ENCODE measurements at regions of chrX and their contacts with region 1.

Region 1: DNA sequence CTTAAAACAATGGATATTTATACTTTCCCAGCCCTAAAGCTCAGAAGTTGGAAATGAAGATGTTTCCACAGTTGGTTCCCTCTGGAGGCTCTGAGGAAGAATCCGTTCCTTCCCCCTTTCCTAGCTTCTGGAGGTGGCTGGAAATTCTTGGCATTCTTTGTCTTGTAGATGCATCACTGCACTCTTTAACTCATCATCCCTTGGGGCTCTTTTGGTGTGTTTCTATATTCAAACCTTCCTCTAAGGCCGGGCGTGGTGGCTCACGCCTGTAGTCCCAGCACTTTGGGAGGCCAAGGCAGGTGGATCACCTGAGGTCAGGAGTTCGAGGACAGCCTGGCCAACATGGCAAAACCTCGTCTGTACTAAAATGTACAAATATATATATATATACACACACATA is 78.7 kb downstream of the VCX3A start:
- DNase-seq: no peak
- H3K4me3 ChIP-seq: no peak overlapping the region
- H3K27ac ChIP-seq: no peak overlapping the region
- H3K4me1 ChIP-seq: no peaks in the 10 kb centered on the region
- H3K27me3 ChIP-seq: no peaks in the 10 kb centered on the region
- CTCF ChIP-seq: no peak
- EP300 ChIP-seq: no peak
- POLR2A ChIP-seq: no peak

Region 2: DNA sequence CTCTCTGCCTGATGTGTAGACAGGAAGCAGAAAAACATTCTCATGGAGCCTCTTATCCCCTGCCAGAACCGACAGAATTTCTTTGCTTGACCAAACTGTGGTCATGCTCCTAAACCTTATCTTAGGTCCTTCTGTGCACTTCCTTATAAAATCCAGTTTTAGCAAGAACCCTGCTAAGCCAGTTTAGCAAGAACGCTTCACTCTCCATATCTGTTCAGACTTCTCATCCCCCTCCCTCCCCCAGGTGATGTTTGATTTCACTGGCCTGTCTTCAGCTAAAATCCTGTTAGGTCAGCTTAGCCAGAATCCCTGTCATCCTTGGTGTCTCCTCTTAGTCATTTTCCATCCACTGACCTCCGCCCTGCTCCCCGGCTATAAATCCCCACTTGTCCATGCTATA is 1611.8 kb before region 1 on chrX:
- in situ Hi-C with region 1: no loop called
- intact Hi-C with region 1: loop called (anchors 5 kb)
- DNase-seq: no peak
- H3K4me3 ChIP-seq: no peak overlapping the region
- H3K27ac ChIP-seq: no peak overlapping the region
- H3K4me1 ChIP-seq: no peaks in the 10 kb centered on the region
- H3K27me3 ChIP-seq: no peaks in the 10 kb centered on the region
- CTCF ChIP-seq: no peak
- EP300 ChIP-seq: no peak
- POLR2A ChIP-seq: no peak

Region 3: GRCh38 chrX:5015451-5015850 is 1440.8 kb before region 1 on chrX:
- in situ Hi-C with region 1: no loop called
- intact Hi-C with region 1: no loop called
- DNase-seq: no peak
- H3K4me3 ChIP-seq: no peak overlapping the region
- H3K27ac ChIP-seq: no peak overlapping the region
- H3K4me1 ChIP-seq: no peaks in the 10 kb centered on the region
- H3K27me3 ChIP-seq: no peaks in the 10 kb centered on the region
- CTCF ChIP-seq: no peak
- EP300 ChIP-seq: no peak
- POLR2A ChIP-seq: no peak

Region 4: GRCh38 chrX:6440647-6441046 is 15.6 kb before region 1 on chrX:
- in situ Hi-C with region 1: no loop called
- intact Hi-C with region 1: loop called (anchors 1 kb)
- DNase-seq: no peak
- H3K4me3 ChIP-seq: no peak overlapping the region
- H3K27ac ChIP-seq: no peak overlapping the region
- H3K4me1 ChIP-seq: no peaks in the 10 kb centered on the region
- H3K27me3 ChIP-seq: no peaks in the 10 kb centered on the region
- CTCF ChIP-seq: no peak
- EP300 ChIP-seq: no peak
- POLR2A ChIP-seq: no peak

Region 5: GRCh38 chrX:7110821-7111276 is 654.6 kb after region 1 on chrX:
- in situ Hi-C with region 1: no loop called
- intact Hi-C with region 1: no loop called
- DNase-seq: no peak
- H3K4me3 ChIP-seq: no peak overlapping the region
- H3K27ac ChIP-seq: peak overlapping the region in 2 of 4 donors; percentile 50 to 60
- H3K4me1 ChIP-seq: peaks cover 11 to 28% (median 19%) of the 10 kb centered on the region in 4 donors
- H3K27me3 ChIP-seq: no peaks in the 10 kb centered on the region
- CTCF ChIP-seq: no peak
- EP300 ChIP-seq: no peak
- POLR2A ChIP-seq: no peak

Measured in transverse colon (tissue), 4 donors.